K562 (cell line): ENCODE measurements at regions of chr9 and their contacts with region 1.

Region 1: GRCh38 chr9:78369639-78370219 is 72.8 kb downstream of the PSAT1 start:
- DNase-seq: peak; percentile 55 to 73 (median 62)
- ATAC-seq: peak; percentile 98
- H3K4me3 ChIP-seq: no peak overlapping the region
- H3K27ac ChIP-seq: no peak overlapping the region
- H3K4me1 ChIP-seq: no peaks in the 10 kb centered on the region; a peak in 2 of 5 replicates
- H3K27me3 ChIP-seq: peaks cover 2 to 11% of the 10 kb centered on the region in 2 experiments; a peak in 3 of 5 replicates
- CTCF ChIP-seq: peak; percentile 73 to 83 (median 74)
- EP300 ChIP-seq: no peak
- POLR2A ChIP-seq: no peak
- RAD21 ChIP-seq: peak; percentile 38 to 68

Region 2: GRCh38 chr9:78261403-78262001 is 108.2 kb before region 1 on chr9:
- CTCF ChIA-PET with region 1: no interaction called
- POLR2A ChIA-PET with region 1: no interaction called
- in situ Hi-C with region 1: no loop called
- intact Hi-C with region 1: loop called (anchors 1 kb)
- DNase-seq: peak; percentile 12 to 23 (median 18)
- ATAC-seq: no peak
- H3K4me3 ChIP-seq: no peak overlapping the region
- H3K27ac ChIP-seq: no peak overlapping the region
- H3K4me1 ChIP-seq: no peaks in the 10 kb centered on the region
- H3K27me3 ChIP-seq: no peaks in the 10 kb centered on the region
- CTCF ChIP-seq: peak in 1 of 3 experiments; percentile 49; a peak in 4 of 6 replicates
- EP300 ChIP-seq: no peak
- POLR2A ChIP-seq: no peak
- RAD21 ChIP-seq: peak; percentile 16 to 52; a peak in 2 of 4 replicates

Region 3: DNA sequence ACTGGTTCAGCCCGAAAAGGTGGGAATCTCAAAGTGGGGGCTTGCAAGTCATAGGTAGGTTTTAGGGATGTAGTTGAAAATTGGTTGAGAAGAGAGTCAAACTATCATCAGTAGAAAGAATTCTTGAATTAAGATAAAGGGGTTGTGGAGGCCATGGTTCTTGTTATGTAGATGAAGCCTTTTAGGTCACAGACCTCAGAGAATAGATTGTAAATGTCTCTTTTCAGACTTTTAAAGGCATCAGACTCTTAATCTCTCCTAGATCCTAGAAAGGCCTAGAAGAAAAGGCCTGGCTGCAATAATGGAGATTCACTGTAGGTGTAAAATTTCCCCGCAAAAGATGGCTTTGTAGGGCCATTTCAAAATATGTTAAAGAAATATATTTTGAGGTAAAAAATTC is 23.6 kb after region 1 on chr9:
- CTCF ChIA-PET with region 1: no interaction called
- POLR2A ChIA-PET with region 1: no interaction called
- in situ Hi-C with region 1: no loop called
- intact Hi-C with region 1: no loop called
- DNase-seq: no peak
- ATAC-seq: no peak
- H3K4me3 ChIP-seq: no peak overlapping the region
- H3K27ac ChIP-seq: no peak overlapping the region
- H3K4me1 ChIP-seq: no peaks in the 10 kb centered on the region
- H3K27me3 ChIP-seq: no peaks in the 10 kb centered on the region
- CTCF ChIP-seq: no peak
- EP300 ChIP-seq: no peak
- POLR2A ChIP-seq: no peak
- RAD21 ChIP-seq: no peak

Region 4: GRCh38 chr9:78574354-78575045 is 204.8 kb after region 1 on chr9:
- CTCF ChIA-PET with region 1: no interaction called
- POLR2A ChIA-PET with region 1: no interaction called
- in situ Hi-C with region 1: no loop called
- intact Hi-C with region 1: no loop called
- DNase-seq: no peak
- ATAC-seq: no peak
- H3K4me3 ChIP-seq: no peak overlapping the region
- H3K27ac ChIP-seq: no peak overlapping the region
- H3K4me1 ChIP-seq: no peaks in the 10 kb centered on the region
- H3K27me3 ChIP-seq: no peaks in the 10 kb centered on the region
- CTCF ChIP-seq: no peak
- EP300 ChIP-seq: no peak
- POLR2A ChIP-seq: no peak
- RAD21 ChIP-seq: no peak